Ovary (tissue), 10 donors: ENCODE measurements at regions of chr20 and their contacts with region 1.

Region 1: DNA sequence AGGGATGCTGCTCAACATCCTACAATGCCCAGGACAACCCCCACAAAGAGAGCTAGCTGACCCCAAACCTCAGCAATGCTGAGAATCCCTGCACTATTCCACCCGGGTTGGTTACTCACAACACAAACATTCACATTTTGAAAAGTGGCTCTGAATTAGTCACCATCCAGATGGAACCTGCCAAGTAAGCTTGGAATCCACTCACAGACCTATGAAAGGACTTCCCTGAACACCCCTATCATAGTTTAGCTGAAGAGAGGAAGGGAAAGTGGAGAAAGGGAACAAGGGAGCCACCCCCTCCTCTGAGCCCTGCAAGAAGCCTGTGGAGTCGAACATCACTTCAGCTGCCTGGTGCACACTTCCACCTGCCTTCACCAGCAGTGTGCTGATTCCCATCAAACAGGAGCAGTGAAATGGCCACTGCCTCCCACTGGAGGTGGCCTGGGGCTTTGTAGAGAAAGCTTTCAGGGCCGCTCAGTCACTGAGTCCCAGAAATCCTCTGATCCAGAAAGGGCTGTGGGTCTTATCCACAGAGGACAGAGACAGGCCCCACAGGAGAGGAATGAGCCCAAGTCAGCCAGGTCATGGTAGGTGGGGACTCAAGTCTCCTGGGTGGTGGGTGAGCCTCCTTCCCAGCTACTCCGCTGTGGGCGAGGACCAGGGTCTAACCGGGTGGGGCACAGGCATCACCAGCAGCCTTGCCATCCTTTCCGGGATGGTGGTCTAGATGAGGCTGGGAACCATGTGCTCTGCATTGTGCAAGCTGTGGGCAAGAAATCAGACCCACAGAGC is 203.7 kb downstream of the SYNDIG1 start:
- DNase-seq: peak in 1 of 5 donors; percentile 4
- H3K4me3 ChIP-seq: no peak overlapping the region
- H3K27ac ChIP-seq: no peak overlapping the region
- H3K4me1 ChIP-seq: no peaks in the 10 kb centered on the region
- H3K27me3 ChIP-seq: no peaks in the 10 kb centered on the region
- CTCF ChIP-seq: no peak
- EP300 ChIP-seq: no peak
- POLR2A ChIP-seq: no peak

Region 2: GRCh38 chr20:24235296-24236175 is 437.5 kb before region 1 on chr20:
- intact Hi-C with region 1: no loop called
- DNase-seq: no peak
- H3K4me3 ChIP-seq: no peak overlapping the region
- H3K27ac ChIP-seq: no peak overlapping the region
- H3K4me1 ChIP-seq: no peaks in the 10 kb centered on the region
- H3K27me3 ChIP-seq: no peaks in the 10 kb centered on the region
- CTCF ChIP-seq: no peak
- EP300 ChIP-seq: no peak
- POLR2A ChIP-seq: no peak

Region 3: DNA sequence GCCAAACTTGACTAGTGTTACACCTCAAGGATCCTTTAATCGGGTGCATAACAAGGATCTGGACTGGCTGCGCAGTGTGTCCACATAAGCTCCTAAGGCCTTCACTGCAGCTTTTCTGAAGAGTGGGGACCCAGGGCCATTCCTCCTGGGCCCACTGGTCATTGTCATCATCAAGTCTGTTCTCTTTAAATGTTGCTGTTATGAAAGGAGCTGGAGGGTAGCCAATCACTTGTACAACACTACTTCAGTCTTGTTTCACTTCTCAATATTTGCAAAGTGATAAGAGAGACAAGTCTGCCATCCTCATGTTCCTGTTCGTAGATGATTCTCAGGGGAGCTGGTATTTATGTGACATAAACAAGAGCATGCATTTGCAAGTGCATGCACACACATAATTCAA is 53.9 kb before region 1 on chr20:
- intact Hi-C with region 1: loop called in 1 of 4 experiments (anchors 10 kb)
- DNase-seq: no peak
- H3K4me3 ChIP-seq: no peak overlapping the region
- H3K27ac ChIP-seq: no peak overlapping the region
- H3K4me1 ChIP-seq: no peaks in the 10 kb centered on the region
- H3K27me3 ChIP-seq: no peaks in the 10 kb centered on the region
- CTCF ChIP-seq: no peak
- EP300 ChIP-seq: no peak
- POLR2A ChIP-seq: no peak